MCF 10A (cell line): ENCODE measurements at regions of chr19 and their contacts with region 1.

Region 1: DNA sequence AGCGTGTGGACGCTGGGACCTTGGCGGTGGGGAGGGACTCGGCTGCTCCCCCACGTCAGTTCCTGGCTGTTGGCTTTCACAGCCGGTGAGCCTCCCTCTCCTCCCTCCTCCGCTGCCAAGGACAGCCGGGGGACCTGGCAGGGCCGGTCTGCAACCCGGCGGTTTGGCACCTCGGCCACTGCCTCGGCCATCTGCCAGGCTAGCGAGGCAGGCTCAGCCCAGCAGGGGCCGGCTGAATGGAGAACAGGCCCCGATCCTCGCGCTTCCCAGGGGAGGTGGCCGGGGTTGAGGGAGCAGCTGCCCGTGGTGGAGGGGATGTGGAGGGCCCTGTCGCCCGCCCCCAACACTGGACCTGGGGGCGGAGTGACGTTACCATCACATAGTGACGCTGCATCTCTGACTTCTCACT is 5.0 kb downstream of the TLE5 start:
- DNase-seq: peak; percentile 93
- H3K4me3 Mint-ChIP-seq: peak overlapping the region; percentile 65
- H3K27ac Mint-ChIP-seq: peak overlapping the region; percentile 46
- H3K4me1 Mint-ChIP-seq: peaks cover 39% of the 10 kb centered on the region
- H3K27me3 Mint-ChIP-seq: no peaks in the 10 kb centered on the region
- CTCF ChIP-seq: no peak

Region 2: GRCh38 chr19:2977001-2977685 is 80.2 kb before region 1 on chr19 and contains the start of gene TLE6:
- CTCF ChIA-PET with region 1: interaction called, 3 read pairs
- POLR2A ChIA-PET with region 1: interaction called, 14 read pairs
- intact Hi-C with region 1: no loop called
- DNase-seq: peak; percentile 96
- H3K4me3 Mint-ChIP-seq: peak within 1 kb of the TSS; percentile 78
- H3K27ac Mint-ChIP-seq: no peak within 1 kb of the TSS
- H3K4me1 Mint-ChIP-seq: peaks cover 23% of the 10 kb centered on the region
- H3K27me3 Mint-ChIP-seq: no peaks in the 10 kb centered on the region
- CTCF ChIP-seq: no peak
- total RNA-seq, gene TLE6: 0.89 and 2.9 TPM in 2 replicates